ENCODE measurements at regions of chr9 and their contacts with region 1.

Region 1: DNA sequence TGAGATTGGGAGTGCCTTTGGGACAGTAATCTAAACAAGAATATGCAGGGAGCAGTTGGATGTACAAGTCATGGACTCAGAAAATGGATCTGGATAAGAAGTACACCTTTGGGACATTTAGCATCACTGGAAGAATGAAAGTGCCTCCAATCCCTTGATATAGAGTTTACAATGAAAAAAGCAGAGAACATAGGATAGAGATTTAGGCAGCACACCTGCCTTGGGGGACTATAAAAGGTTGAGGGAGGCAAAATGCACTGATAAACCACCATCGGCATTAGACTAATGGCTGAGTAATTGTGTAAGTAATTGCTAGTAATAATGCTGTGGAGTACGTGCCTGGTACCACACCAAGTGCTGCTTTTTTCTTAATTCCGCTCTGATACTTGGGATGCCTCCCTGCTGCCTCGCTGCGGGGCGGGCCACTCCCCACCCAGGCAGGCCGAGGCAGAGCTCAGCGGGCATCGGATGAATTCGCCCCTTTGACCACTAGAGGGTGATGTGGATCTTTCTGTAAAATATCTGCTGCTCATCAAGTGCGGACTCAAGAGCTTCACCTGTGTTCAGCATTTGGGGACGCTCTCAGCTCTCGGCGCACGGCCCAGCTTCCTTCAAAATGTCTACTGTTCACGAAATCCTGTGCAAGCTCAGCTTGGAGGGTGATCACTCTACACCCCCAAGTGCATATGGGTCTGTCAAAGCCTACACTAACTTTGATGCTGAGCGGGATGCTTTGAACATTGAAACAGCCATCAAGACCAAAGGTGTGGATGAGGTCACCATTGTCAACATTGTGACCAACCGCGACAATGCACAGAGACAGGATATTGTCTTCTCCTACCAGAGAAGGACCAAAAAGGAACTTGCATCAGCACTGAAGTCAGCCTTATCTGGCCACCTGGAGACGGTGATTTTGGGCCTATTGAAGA is 99.9 kb downstream of the ANKRD18B start:
- DNase-seq: peak; percentile 85
- CTCF ChIP-seq: peak; percentile 93

Region 2: GRCh38 chr9:33611358-33611757 is 12.6 kb before region 1 on chr9:
- CTCF ChIA-PET with region 1: interaction called, 11 read pairs
- POLR2A ChIA-PET with region 1: no interaction called
- DNase-seq: no peak
- CTCF ChIP-seq: no peak

Region 3: DNA sequence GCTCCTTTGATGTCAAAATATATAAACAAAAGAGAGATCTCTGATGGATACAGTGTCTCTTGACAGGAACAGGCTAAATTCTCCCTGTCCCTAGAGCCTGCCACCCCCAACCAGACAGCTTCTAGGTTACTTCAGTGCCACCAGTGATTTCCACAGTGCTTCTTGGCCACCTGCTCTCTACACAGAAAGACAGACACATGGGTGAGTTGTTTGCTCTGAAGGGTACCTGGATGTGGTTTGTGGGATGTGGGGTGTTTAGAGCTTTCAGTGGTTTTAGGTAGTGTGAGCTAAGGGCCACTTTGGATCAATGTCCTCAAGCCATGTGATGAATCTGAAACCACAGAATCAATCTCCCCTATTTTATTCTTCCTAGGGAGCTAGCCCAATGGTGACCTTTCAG is 25.5 kb after region 1 on chr9:
- CTCF ChIA-PET with region 1: interaction called, 11 read pairs
- POLR2A ChIA-PET with region 1: no interaction called
- DNase-seq: no peak
- CTCF ChIP-seq: no peak

Region 4: DNA sequence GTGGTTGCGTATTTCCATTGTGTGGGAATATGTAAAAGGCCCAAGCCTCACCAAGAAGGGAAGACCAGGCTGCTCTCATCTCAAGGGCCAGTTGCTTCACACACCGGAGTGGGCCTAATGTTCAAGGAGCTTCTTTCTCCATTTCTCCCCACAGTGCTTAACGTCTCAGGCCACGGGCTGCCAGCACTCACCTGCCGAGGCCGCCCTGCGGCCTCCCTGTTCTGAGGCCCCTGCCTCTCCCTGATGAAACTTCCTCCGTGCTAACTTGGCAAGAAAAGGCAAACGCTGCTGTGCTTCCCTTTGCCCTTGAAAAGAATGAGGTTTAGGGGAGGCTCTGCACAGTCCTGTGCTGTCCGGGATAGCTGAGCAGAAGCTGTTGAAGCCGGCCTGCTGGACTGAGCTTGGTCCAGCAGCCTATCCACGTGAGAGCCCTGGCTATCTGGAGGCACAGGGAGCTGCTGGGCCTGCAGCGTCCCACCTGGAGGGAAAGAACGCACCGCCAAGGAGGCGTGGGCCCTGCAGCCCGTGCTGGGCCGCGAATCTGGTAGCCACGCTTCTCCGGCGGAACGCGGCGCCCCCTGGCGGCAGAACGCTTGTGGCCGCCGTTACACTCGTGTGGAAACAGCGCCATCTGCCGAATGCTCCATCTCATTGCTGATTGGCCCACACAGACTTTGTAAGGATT is 97.9 kb after region 1 on chr9:
- CTCF ChIA-PET with region 1: interaction called, 277 read pairs
- POLR2A ChIA-PET with region 1: no interaction called
- DNase-seq: peak; percentile 82
- CTCF ChIP-seq: peak; percentile 100

Region 5: GRCh38 chr9:33731142-33731541 is 107.2 kb after region 1 on chr9:
- CTCF ChIA-PET with region 1: interaction called, 10 read pairs
- POLR2A ChIA-PET with region 1: no interaction called
- DNase-seq: no peak
- CTCF ChIP-seq: no peak

Region 6: GRCh38 chr9:33778700-33779351 is 154.9 kb after region 1 on chr9:
- CTCF ChIA-PET with region 1: interaction called, 20 read pairs
- POLR2A ChIA-PET with region 1: no interaction called
- DNase-seq: peak; percentile 74
- CTCF ChIP-seq: peak; percentile 86

Measured in GM10248 (cell line).